Sigmoid colon (tissue), 7 donors: ENCODE measurements at regions of chr9 and their contacts with region 1.

Region 1: GRCh38 chr9:122281368-122281767 is 16.7 kb downstream of the MRRF start:
- DNase-seq: no peak
- H3K4me3 ChIP-seq: no peak overlapping the region
- H3K27ac ChIP-seq: no peak overlapping the region
- H3K4me1 ChIP-seq: no peaks in the 10 kb centered on the region
- H3K27me3 ChIP-seq: no peaks in the 10 kb centered on the region
- CTCF ChIP-seq: no peak
- EP300 ChIP-seq: no peak
- POLR2A ChIP-seq: no peak

Region 2: DNA sequence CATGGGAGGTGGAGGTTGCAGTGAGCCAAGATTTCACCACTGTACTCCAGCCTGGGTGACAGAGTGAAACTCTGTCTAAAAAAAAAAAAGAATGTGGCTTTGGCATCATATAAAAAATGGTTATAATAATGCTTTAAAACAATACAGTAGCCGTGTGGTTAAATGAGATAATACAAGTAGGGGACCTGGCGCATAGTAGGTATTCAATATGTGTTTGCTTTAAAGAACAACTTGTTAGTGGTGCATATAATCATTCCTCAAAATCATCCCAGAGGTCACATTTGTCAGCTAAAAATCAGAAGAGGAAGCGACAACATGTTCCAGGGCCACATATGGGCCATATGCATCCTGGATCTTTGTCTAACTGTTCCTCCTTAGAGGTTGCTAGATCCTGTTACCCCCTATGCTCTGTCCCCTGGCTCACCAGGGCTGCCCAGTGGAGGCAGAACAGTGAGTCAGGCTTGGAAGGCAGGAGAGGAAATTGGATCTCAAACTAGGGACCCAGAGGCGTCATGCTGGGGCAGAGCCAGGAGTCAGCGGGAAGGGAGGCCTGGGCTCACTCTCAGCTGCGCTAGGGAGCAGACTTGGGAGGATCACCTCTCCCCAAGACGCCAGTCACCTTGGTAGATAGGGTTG is 80.3 kb before region 1 on chr9:
- intact Hi-C with region 1: no loop called
- DNase-seq: no peak
- H3K4me3 ChIP-seq: no peak overlapping the region
- H3K27ac ChIP-seq: no peak overlapping the region
- H3K4me1 ChIP-seq: no peaks in the 10 kb centered on the region
- H3K27me3 ChIP-seq: no peaks in the 10 kb centered on the region
- CTCF ChIP-seq: no peak
- EP300 ChIP-seq: no peak
- POLR2A ChIP-seq: no peak

Region 3: DNA sequence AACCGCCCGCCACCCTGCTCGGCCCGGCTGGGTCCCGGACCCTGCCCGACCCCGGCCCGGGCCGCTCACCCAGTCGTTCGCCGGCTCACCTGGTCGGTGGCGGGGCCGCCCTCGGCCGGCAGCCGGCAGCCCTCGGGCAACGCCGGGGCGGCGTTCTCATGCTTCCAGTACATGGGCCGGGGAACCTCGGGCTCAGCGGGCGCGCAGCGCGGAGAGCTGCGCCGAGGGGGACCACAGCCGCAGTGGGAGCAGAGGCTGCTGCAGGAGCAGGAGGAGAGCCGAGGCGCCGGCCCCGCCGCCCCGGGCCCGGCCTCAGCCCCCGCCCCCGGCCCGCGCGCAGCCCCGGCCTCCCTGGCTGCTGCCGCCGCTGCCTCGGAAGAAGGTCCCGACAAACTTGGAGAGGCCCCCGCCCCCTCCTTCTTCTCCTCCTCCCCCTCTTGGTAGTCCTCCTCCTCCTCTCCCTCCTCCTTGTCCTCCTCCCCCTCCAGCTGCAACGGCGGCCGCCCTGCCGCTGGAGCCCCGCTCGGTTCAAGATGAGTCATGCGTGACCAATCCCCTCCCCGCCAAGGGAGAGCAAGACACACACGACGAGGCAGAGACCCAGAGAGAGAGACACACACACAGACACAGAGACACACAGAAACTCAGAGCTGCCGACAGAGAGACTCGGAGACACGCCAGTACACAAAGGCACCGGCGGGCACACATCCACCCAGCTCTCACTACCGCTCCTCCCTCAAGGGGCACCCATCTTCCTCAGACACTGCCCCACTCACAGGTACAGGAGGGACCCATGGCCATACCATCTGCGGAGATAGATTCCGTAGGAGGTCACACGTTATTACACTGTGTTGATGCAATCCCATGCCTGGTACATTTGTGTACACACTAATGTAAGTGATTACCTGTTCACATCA is 52.5 kb before region 1 on chr9 and contains the start of gene LHX6:
- intact Hi-C with region 1: loop called (anchors 2 kb)
- DNase-seq: no peak
- H3K4me3 ChIP-seq: peak within 1 kb of the TSS in 3 of 4 donors; percentile 27 to 44 (median 43)
- H3K27ac ChIP-seq: peak within 1 kb of the TSS in 1 of 4 donors; percentile 55
- H3K4me1 ChIP-seq: peaks cover 0 to 41% (median 38%) of the 10 kb centered on the region in 4 donors
- H3K27me3 ChIP-seq: peaks cover 40 to 76% (median 75%) of the 10 kb centered on the region in 3 donors
- CTCF ChIP-seq: no peak
- EP300 ChIP-seq: no peak
- POLR2A ChIP-seq: no peak
- total RNA-seq, gene LHX6: 0.99 to 4.7 (median 1.5) TPM